B cell (primary cell): ENCODE measurements at regions of chr5 and their contacts with region 1.

Region 1: DNA sequence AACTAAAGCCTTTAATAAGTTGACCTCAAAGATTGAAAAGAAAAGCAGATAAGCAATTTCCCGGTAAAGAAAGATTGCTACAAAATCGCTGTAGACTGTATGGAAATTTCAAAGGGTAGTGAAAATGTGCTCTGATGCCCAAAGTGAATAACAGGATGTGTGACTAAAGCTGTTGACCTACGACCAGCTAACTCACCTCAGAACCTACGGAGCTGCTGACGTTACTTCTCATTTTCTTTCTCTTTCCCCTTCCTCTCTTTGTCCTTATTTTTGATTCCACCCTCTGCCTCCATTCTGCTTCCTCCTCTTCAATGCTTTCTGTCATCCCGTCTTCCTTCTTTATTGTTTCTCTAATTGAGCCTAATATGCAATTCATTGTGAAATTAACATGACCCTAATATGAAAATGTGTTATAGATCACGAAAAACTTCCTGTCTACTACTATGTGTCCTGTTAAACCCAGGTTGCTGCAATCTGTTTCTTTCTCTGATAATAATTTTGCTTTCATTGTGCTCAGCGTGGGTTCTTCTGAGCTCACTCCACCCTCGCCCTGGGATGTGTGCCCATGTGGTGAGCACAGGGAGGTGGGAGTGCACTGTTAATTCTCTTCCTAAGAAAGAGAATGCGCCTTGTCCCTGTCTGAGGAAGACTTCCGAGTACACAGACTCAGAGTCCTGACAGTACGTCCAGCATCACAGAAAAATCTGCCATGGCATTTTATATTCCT is 103.0 kb downstream of the PDE4D start:
- DNase-seq: peak; percentile 78
- ATAC-seq: peak; percentile 84
- H3K4me3 ChIP-seq: peak overlapping the region in 2 of 5 experiments; percentile 1 to 48
- H3K4me3 Mint-ChIP-seq: peak overlapping the region; percentile 77
- H3K27ac ChIP-seq: peak overlapping the region; percentile 62 to 83
- H3K27ac Mint-ChIP-seq: peak overlapping the region; percentile 92
- H3K4me1 ChIP-seq: peaks cover 34% of the 10 kb centered on the region in 2 donors
- H3K4me1 Mint-ChIP-seq: peaks cover 60% of the 10 kb centered on the region
- H3K27me3 ChIP-seq: no peaks in the 10 kb centered on the region
- H3K27me3 Mint-ChIP-seq: no peaks in the 10 kb centered on the region
- CTCF ChIP-seq: no peak

Region 2: DNA sequence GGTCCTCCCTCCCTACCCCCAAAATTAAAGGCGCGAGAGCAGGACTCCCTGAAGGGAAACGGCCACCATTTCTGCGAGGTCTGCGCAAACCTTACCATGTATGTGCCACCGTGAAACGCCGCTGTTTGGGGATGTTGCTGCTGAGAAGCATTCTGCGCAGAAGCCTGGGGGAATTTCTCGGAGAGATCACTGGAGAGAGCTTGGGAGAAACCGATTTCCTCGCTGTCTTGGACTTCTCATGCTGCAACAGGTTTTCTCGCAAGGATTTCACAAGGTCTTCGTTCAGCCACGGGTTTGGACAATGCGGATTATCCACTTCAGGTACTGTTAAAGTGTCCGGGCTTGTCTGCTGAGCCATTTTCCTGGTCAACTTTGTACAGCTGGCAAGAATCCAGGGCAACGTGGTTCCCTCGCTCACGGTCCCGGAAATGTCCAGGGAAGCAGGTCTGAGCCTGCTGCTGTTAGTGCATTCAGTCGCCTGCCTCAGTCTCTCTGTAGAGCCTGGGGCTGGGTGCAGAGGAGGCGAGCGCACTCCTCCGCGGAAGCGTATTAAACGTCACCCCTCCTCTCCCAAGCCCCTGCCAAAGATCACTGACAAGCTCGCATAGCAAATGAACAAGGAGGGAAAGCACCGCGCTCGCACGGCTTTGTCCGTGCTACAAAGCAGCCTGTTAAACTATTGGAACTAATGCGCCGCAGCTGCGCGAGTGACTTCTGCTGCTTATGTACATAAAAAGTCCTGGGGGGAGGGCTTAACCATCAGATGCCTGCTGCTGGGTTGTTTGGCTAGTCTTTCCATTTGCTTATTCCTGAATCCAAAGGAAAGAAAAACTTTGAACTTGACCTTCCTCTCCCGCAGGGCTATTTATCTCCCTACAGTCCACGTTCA is 22.2 kb before region 1 on chr5:
- CTCF ChIA-PET with region 1: interaction called, 3 read pairs
- POLR2A ChIA-PET with region 1: interaction called, 4 read pairs
- intact Hi-C with region 1: loop called (anchors 2 kb)
- DNase-seq: peak; percentile 74
- ATAC-seq: peak; percentile 80
- H3K4me3 ChIP-seq: peak overlapping the region; percentile 55 to 77 (median 70)
- H3K4me3 Mint-ChIP-seq: peak overlapping the region; percentile 90
- H3K27ac ChIP-seq: peak overlapping the region; percentile 41 to 57
- H3K27ac Mint-ChIP-seq: peak overlapping the region; percentile 74
- H3K4me1 ChIP-seq: peaks cover 28 to 37% of the 10 kb centered on the region in 2 donors
- H3K4me1 Mint-ChIP-seq: peaks cover 43% of the 10 kb centered on the region
- H3K27me3 ChIP-seq: peaks cover 0 to 10% (median 5%) of the 10 kb centered on the region in 4 experiments
- H3K27me3 Mint-ChIP-seq: peaks cover 11% of the 10 kb centered on the region
- CTCF ChIP-seq: no peak